ENCODE measurements at regions of chr9 and their contacts with region 1.

Region 1: GRCh38 chr9:131046581-131047202 is 37.7 kb downstream of the LAMC3 start:
- DNase-seq: peak in 1 of 2 experiments; percentile 72
- H3K4me3 ChIP-seq: peak overlapping the region; percentile 2; the same call in 1 of the 2 replicates
- H3K27ac ChIP-seq: no peak overlapping the region
- H3K4me1 ChIP-seq: no peaks in the 10 kb centered on the region
- H3K27me3 ChIP-seq: peaks cover 10% of the 10 kb centered on the region; the same call in 1 of the 2 replicates
- CTCF ChIP-seq: peak; percentile 94

Region 2: DNA sequence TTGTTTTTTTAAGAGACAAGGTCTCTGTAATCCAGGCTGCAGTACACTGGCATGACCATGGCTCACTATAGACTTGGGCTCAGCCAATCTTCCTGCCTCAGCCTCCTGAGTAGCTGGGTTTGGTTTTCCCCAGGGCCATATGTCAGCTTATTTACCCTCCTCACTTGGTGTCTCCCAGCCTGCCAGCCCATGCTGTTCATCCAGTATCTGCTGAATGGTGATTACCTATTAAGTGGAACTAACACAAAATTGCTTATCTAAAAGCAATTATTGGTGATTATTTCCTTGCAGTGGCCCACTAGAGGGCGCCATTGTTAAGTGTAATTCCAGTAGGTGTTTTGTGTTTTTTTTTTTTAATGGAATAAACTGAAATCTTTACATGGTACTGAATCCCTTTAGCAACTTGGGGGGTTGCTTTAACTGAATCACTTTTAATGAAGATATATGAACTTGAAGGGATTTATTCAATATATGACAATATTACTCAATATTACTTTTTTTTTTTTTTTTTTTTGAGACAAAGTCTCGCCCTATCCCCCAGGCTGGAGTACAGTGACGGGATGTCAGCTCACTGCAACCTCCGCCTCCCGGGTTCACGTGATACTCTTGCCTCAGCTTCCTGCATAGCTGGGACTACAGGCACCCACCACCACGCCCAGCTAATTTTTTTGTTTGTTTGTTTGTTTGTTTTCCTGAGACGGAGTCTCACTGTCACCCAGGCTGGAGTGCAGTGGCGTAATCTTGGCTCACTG is 339.3 kb before region 1 on chr9:
- CTCF ChIA-PET with region 1: interaction called, 6 read pairs
- POLR2A ChIA-PET with region 1: interaction called, 3 read pairs
- intact Hi-C with region 1: loop called (anchors 2 kb)
- DNase-seq: peak; percentile 59 to 61
- H3K4me3 ChIP-seq: no peak overlapping the region
- H3K27ac ChIP-seq: no peak overlapping the region
- H3K4me1 ChIP-seq: no peaks in the 10 kb centered on the region
- H3K27me3 ChIP-seq: no peaks in the 10 kb centered on the region
- CTCF ChIP-seq: peak; percentile 94

Region 3: DNA sequence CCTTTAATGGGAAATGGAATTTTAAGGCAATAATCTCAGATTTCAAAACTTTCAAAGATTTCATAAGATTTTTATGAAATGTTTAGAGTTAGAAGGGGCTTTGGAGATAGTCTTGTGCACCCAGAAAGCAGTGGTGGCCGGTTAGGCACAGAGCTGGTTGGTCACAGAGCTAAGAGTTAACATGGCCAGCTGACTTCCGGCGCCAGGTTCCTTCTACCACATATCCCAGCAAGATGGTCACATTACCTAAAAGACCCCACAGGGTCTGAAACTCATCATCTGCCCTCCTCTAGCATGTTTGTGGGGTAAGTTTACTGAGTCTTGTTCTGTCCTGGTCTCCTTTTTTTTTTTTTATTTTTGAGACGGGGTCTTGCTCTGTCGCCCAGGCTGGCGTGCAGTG is 169.4 kb before region 1 on chr9:
- CTCF ChIA-PET with region 1: no interaction called
- POLR2A ChIA-PET with region 1: interaction called, 12 read pairs
- intact Hi-C with region 1: no loop called
- DNase-seq: no peak
- H3K4me3 ChIP-seq: no peak overlapping the region
- H3K27ac ChIP-seq: no peak overlapping the region
- H3K4me1 ChIP-seq: no peaks in the 10 kb centered on the region
- H3K27me3 ChIP-seq: no peaks in the 10 kb centered on the region
- CTCF ChIP-seq: no peak

Region 4: DNA sequence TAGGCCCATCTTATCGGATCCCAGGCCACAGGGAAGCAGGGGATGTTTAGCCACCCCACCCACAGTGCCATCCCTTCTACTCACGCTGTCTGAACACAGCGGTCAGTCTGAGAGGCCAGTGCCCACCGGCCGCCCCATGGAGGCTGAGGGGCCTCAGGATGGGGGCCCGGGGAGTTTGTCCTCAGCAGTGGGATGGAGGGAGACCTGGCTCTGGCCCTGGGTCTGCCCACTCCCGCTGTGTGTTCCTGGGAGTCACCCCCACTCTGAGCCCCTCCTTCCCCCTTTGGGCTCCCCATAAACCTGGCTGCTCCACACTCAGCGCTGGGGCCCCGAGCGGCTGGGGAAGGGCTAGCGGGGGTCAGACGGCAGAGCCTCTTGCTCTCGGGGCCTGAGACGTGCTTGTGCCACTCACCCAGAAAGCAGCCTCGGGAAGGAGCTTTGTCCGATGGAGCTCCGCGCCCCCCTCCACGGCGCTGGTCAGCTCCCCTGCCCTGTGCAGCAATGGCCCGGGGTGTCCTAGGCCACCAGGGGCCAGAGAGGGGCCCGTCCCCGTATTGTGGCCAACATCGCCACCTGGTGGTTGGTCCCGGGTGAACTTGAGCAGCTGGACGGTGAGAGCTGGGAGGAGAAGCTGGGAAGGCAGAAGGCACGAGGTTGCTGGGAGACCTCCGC is 48.6 kb before region 1 on chr9:
- CTCF ChIA-PET with region 1: interaction called, 16 read pairs
- POLR2A ChIA-PET with region 1: no interaction called
- intact Hi-C with region 1: no loop called
- DNase-seq: peak; percentile 52 to 84
- H3K4me3 ChIP-seq: no peak overlapping the region
- H3K27ac ChIP-seq: no peak overlapping the region
- H3K4me1 ChIP-seq: no peaks in the 10 kb centered on the region
- H3K27me3 ChIP-seq: peaks cover 29% of the 10 kb centered on the region
- CTCF ChIP-seq: peak; percentile 88

Region 5: GRCh38 chr9:131187957-131188356 is 141.3 kb after region 1 on chr9:
- CTCF ChIA-PET with region 1: interaction called, 14 read pairs
- POLR2A ChIA-PET with region 1: no interaction called
- intact Hi-C with region 1: no loop called
- DNase-seq: no peak
- H3K4me3 ChIP-seq: no peak overlapping the region
- H3K27ac ChIP-seq: no peak overlapping the region
- H3K4me1 ChIP-seq: no peaks in the 10 kb centered on the region
- H3K27me3 ChIP-seq: no peaks in the 10 kb centered on the region
- CTCF ChIP-seq: no peak

Measured in PC-9 (cell line).